Thyroid gland (tissue), 4 donors: ENCODE measurements at regions of chr5 and their contacts with region 1.

Region 1: DNA sequence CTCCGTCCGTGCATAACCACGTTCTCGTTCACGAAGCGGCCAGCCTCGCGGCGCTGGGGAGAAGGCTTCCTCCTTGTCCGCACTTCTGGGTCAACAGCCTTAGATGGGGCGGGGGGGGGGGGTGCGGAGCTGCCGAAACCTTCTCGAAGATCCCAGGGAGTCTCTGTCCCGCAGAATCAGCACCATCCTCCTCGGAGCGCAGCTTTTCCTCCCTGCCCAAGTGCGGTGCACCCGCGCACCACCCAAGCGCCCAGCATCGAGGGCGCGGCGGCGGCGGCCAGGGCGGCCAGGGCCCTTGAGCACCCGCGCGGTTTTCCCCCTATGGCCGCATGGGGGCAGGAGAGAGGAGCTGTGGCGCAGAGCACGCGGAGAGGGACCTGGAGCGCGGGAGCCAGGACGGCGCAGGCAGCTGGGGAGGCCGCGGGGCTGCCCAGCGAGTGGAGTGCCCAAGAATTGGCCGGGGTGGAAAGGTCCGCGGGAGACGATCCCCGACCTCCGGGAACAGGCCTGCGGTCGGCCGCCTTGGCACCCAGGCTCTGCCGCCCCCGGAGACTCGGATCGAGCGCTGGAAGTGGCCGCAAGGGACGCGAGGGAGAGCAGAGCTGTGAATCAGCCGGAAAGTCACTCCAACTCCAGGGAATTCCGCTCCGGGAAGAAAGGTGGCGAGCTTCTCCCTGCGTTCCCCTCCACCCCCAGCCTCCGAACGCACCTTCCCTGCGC is 43.1 kb downstream of the TMEM174 start:
- DNase-seq: peak; percentile 78 to 82
- H3K4me3 ChIP-seq: peak overlapping the region in 1 of 3 donors; percentile 3
- H3K27ac ChIP-seq: no peak overlapping the region
- H3K4me1 ChIP-seq: peaks cover 0 to 17% of the 10 kb centered on the region in 2 donors
- H3K27me3 ChIP-seq: peaks cover 10% of the 10 kb centered on the region
- CTCF ChIP-seq: peak; percentile 68 to 94 (median 88)
- POLR2A ChIP-seq: no peak

Region 2: DNA sequence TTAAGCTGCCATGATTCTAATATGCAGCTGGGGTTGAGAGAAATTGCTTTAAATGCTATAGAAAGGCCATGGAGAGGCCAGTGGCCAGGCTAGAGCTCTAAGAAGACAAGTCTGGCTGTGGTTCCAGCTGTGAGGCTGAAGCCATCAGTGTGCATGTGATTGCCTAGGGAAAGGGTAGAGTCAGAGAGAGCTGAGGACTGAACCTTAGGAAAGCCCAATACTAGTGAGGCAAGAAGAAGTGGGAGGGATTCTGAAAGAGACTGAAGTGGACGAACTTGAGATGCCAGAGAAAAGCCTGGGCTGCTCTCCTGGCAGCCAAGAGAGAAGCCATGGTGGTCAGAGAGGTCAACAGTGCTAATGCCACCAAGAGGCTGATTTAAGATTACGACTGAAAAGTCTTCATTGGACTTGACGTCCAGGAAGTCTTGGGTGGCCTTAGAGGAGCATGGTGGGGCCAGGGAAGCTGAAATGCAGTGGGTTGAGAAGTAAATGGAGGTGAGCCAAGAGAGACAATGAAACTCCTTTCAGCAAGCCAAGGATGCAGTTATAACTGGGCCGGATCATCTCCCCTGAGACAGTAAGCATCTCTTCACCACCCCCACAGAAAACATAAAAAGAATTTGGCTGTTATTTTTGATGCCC is 90.1 kb after region 1 on chr5:
- intact Hi-C with region 1: no loop called
- DNase-seq: no peak
- H3K4me3 ChIP-seq: no peak overlapping the region
- H3K27ac ChIP-seq: no peak overlapping the region
- H3K4me1 ChIP-seq: peaks cover 25 to 51% of the 10 kb centered on the region in 2 donors
- H3K27me3 ChIP-seq: peaks cover 18% of the 10 kb centered on the region
- CTCF ChIP-seq: no peak
- POLR2A ChIP-seq: no peak

Region 3: DNA sequence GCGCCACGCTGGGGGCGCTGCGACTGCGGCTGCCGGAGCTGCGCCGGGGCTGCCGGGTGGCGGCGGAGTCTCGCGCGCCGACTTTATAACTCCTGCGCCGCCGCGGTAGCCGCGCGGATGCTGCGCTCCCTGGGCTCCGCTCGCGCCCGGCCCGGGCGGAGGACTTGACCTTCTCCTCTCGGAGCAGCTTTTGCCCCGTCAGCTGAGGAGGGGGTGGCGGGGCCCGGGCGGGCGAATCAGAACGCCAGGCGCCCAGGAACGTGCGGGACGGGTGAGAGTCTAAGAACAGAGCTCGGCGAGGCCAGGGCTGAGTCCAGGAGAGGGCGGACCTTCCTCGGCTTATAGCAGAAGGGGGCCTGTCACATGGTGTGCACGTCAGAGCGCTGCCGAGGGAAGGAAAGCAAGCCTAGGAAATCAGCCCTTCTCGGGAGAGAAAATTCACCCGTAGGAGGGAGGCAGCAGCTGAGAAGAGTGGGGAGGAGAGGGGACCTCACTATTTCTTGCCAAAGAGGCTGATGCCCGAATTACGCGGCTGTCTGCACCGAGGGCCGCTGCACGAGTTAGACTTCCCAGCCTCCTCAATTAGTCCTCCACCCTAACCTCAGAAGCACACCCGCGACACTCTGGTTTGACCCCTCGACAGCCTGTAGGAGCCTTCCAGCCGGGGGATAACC is 232.5 kb after region 1 on chr5 and contains the start of gene FOXD1:
- intact Hi-C with region 1: loop called (anchors 5 kb)
- DNase-seq: peak; percentile 29 to 37
- H3K4me3 ChIP-seq: peak within 1 kb of the TSS in 1 of 3 donors; percentile 18
- H3K27ac ChIP-seq: no peak within 1 kb of the TSS
- H3K4me1 ChIP-seq: peaks cover 10 to 16% of the 10 kb centered on the region in 2 donors
- H3K27me3 ChIP-seq: peaks cover 79% of the 10 kb centered on the region
- CTCF ChIP-seq: no peak
- POLR2A ChIP-seq: no peak
- total RNA-seq, gene FOXD1: 0.38 to 1.6 (median 1.2) TPM in 3 of 4 donors, not detected in the other